ENCODE measurements at regions of chr6 and their contacts with region 1.

Region 1: GRCh38 chr6:25987848-25988247 is 25.2 kb downstream of the TRIM38 start:
- DNase-seq: no peak
- H3K4me3 ChIP-seq: no peak overlapping the region
- H3K27ac ChIP-seq: no peak overlapping the region
- H3K4me1 ChIP-seq: no peaks in the 10 kb centered on the region
- H3K27me3 ChIP-seq: no peaks in the 10 kb centered on the region
- CTCF ChIP-seq: no peak
- POLR2A ChIP-seq: no peak

Region 2: GRCh38 chr6:26003102-26003694 is 15.3 kb after region 1 on chr6:
- intact Hi-C with region 1: no loop called
- DNase-seq: no peak
- H3K4me3 ChIP-seq: no peak overlapping the region
- H3K27ac ChIP-seq: no peak overlapping the region
- H3K4me1 ChIP-seq: no peaks in the 10 kb centered on the region
- H3K27me3 ChIP-seq: no peaks in the 10 kb centered on the region
- CTCF ChIP-seq: peak; percentile 67 to 85 (median 70)
- POLR2A ChIP-seq: no peak

Region 3: GRCh38 chr6:26059941-26060340 is 72.1 kb after region 1 on chr6:
- intact Hi-C with region 1: loop called (anchors 2 kb)
- DNase-seq: no peak
- H3K4me3 ChIP-seq: no peak overlapping the region
- H3K27ac ChIP-seq: no peak overlapping the region
- H3K4me1 ChIP-seq: no peaks in the 10 kb centered on the region
- H3K27me3 ChIP-seq: no peaks in the 10 kb centered on the region
- CTCF ChIP-seq: no peak
- POLR2A ChIP-seq: no peak

Measured in breast epithelium (tissue), 4 donors.